Right ventricle myocardium inferior (tissue), 1 donor: ENCODE measurements at regions of chr5 and their contacts with region 1.

Region 1: GRCh38 chr5:57209351-57210040 is 35.6 kb downstream of the GPBP1 start:
- DNase-seq: no peak
- ATAC-seq: no peak

Region 2: DNA sequence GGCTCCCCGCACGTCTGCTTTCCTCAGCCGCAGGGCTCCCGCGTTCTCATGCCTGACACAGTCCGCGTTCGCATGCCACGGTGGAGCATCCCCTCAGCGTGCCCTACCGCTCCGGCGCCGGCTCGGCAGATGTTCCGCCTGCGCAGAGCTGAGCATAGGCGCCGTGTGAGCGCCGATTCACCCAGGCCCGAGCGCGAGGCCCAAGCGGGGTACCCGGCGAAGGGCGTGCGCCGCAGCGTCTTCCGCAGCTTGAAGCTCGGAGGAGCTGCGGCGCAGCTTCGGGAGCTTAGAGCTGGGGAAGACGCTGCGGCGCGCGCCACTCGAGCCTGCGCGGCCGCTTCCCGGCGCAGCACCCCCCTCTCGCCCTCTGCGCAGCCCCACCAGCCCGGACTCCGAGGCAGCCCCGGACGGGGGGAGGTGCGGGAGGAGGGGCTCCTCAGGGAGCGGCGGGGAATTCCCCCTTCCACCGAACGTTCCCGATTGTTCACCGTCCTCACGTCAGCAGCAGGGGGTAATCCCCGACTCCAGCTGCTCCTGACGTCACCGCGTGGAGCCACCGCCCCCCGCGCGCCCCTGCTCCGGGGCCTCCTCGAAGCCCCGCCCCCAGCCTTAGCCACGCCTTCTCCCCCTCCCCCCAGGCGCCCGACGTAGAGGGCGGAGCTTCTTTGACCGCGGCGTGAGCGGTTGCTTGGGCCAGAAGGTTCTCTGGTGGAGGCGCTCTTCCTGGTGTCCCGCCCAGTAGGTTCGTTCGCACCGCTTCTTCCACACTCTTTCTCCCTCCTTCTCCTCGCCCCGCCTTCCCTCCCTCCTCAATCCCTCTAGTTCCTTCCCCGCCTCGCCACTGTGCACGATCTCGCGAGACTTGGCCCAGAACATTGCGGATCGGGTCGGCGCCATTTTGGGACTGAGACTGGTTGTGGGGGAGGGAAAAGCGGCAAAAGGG is 36.0 kb before region 1 on chr5 and contains the start of gene GPBP1:
- intact Hi-C with region 1: loop called (anchors 5 kb)
- DNase-seq: peak; percentile 99
- ATAC-seq: peak; percentile 94
- total RNA-seq, gene GPBP1: 58.9 TPM